ENCODE measurements at regions of chr11 and their contacts with region 1.

Region 1: GRCh38 chr11:63768237-63769043 is at the start of gene ZFTA:
- DNase-seq: no peak
- ATAC-seq: peak; percentile 1
- H3K4me3 ChIP-seq: peak within 1 kb of the TSS; percentile 65 to 98 (median 85)
- H3K27ac ChIP-seq: peak within 1 kb of the TSS; percentile 86
- H3K4me1 ChIP-seq: peaks cover 43% of the 10 kb centered on the region
- H3K27me3 ChIP-seq: peaks cover 0 to 4% of the 10 kb centered on the region in 2 experiments; a peak in 1 of 5 replicates
- CTCF ChIP-seq: peak; percentile 52; the same call in 1 of the 2 replicates
- EP300 ChIP-seq: no peak
- POLR2A ChIP-seq: peak in 1 of 2 experiments; percentile 4; a peak in 1 of 4 replicates
- RAD21 ChIP-seq: peak; percentile 90
- total RNA-seq, gene ZFTA: 6.5 and 10.4 TPM in 2 replicates

Region 2: DNA sequence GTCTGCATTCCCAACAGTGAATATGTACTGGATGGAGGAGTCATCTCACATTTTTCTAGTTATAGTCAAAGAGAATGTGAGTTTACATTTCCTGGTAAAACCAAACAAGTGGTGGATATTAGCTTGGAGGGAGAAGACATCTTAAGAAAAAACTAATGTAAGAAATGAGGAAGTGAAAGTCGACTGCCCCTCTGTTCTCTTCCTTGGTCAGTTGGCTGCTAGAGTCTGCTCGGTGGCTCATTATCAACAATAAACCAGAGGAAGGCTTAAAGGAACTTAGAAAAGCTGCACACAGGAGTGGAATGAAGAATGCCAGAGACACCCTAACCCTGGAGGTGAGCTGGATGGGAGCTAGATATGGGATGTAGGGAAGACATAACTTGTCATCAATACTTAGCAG is 393.0 kb before region 1 on chr11:
- CTCF ChIA-PET with region 1: no interaction called
- POLR2A ChIA-PET with region 1: no interaction called
- in situ Hi-C with region 1: no loop called
- intact Hi-C with region 1: no loop called
- DNase-seq: no peak
- ATAC-seq: no peak
- H3K4me3 ChIP-seq: no peak overlapping the region
- H3K27ac ChIP-seq: no peak overlapping the region
- H3K4me1 ChIP-seq: peaks cover 30% of the 10 kb centered on the region
- H3K27me3 ChIP-seq: no peaks in the 10 kb centered on the region; a peak in 1 of 5 replicates
- CTCF ChIP-seq: no peak
- EP300 ChIP-seq: no peak
- POLR2A ChIP-seq: no peak
- RAD21 ChIP-seq: no peak

Region 3: GRCh38 chr11:63652671-63653070 is 115.8 kb before region 1 on chr11:
- CTCF ChIA-PET with region 1: no interaction called
- POLR2A ChIA-PET with region 1: no interaction called
- in situ Hi-C with region 1: no loop called
- intact Hi-C with region 1: no loop called
- DNase-seq: no peak
- ATAC-seq: no peak
- H3K4me3 ChIP-seq: no peak overlapping the region
- H3K27ac ChIP-seq: no peak overlapping the region
- H3K4me1 ChIP-seq: no peaks in the 10 kb centered on the region
- H3K27me3 ChIP-seq: no peaks in the 10 kb centered on the region
- CTCF ChIP-seq: no peak
- EP300 ChIP-seq: no peak
- POLR2A ChIP-seq: no peak
- RAD21 ChIP-seq: no peak

Region 4: DNA sequence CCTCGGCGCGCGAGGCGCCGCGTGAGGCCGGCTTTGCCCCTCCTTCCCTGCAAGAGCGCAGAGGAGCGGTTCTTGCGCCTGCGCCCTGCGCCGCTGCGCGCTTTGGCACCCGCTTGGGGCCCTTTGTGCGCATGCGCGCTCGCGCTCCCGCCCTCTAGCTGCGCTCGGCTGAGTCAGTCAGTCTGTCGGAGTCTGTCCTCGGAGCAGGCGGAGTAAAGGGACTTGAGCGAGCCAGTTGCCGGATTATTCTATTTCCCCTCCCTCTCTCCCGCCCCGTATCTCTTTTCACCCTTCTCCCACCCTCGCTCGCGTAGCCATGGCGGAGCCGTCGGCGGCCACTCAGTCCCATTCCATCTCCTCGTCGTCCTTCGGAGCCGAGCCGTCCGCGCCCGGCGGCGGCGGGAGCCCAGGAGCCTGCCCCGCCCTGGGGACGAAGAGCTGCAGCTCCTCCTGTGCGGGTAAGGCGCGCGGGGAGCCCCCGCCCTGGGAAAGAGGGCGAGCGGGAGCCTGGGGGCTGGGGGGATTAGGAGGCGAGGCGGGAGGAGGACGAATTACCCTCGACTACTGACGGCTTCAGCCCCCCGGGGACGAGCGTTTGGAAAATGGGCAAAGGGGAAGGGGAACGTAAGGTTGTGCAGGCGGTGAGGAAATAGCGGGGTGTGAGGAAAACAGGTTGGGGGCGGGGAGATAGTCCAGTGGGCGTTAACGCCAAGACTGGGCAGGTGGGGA is 87.0 kb before region 1 on chr11 and contains the start of gene RTN3:
- CTCF ChIA-PET with region 1: no interaction called
- POLR2A ChIA-PET with region 1: interaction called, 11 read pairs
- in situ Hi-C with region 1: no loop called
- intact Hi-C with region 1: no loop called
- DNase-seq: peak; percentile 91
- ATAC-seq: peak; percentile 89
- H3K4me3 ChIP-seq: peak within 1 kb of the TSS; percentile 78 to 83 (median 79)
- H3K27ac ChIP-seq: peak within 1 kb of the TSS; percentile 86
- H3K4me1 ChIP-seq: peaks cover 28% of the 10 kb centered on the region
- H3K27me3 ChIP-seq: peaks cover 0 to 4% of the 10 kb centered on the region in 2 experiments; a peak in 2 of 5 replicates
- CTCF ChIP-seq: peak; percentile 35
- EP300 ChIP-seq: no peak
- POLR2A ChIP-seq: peak; percentile 87 to 94
- RAD21 ChIP-seq: no peak
- total RNA-seq, gene RTN3: 25.3 and 32.2 TPM in 2 replicates

Region 5: GRCh38 chr11:63783925-63784592 is 15.6 kb after region 1 on chr11:
- CTCF ChIA-PET with region 1: no interaction called
- POLR2A ChIA-PET with region 1: interaction called, 12 read pairs
- in situ Hi-C with region 1: no loop called
- intact Hi-C with region 1: no loop called
- DNase-seq: peak; percentile 51
- ATAC-seq: peak; percentile 94
- H3K4me3 ChIP-seq: peak overlapping the region in 2 of 3 experiments; percentile 33 to 34; a peak in 3 of 6 replicates
- H3K27ac ChIP-seq: peak overlapping the region; percentile 87
- H3K4me1 ChIP-seq: peaks cover 22% of the 10 kb centered on the region
- H3K27me3 ChIP-seq: no peaks in the 10 kb centered on the region
- CTCF ChIP-seq: no peak
- EP300 ChIP-seq: no peak
- POLR2A ChIP-seq: peak; percentile 20 to 50; a peak in 1 of 4 replicates
- RAD21 ChIP-seq: no peak

Region 6: DNA sequence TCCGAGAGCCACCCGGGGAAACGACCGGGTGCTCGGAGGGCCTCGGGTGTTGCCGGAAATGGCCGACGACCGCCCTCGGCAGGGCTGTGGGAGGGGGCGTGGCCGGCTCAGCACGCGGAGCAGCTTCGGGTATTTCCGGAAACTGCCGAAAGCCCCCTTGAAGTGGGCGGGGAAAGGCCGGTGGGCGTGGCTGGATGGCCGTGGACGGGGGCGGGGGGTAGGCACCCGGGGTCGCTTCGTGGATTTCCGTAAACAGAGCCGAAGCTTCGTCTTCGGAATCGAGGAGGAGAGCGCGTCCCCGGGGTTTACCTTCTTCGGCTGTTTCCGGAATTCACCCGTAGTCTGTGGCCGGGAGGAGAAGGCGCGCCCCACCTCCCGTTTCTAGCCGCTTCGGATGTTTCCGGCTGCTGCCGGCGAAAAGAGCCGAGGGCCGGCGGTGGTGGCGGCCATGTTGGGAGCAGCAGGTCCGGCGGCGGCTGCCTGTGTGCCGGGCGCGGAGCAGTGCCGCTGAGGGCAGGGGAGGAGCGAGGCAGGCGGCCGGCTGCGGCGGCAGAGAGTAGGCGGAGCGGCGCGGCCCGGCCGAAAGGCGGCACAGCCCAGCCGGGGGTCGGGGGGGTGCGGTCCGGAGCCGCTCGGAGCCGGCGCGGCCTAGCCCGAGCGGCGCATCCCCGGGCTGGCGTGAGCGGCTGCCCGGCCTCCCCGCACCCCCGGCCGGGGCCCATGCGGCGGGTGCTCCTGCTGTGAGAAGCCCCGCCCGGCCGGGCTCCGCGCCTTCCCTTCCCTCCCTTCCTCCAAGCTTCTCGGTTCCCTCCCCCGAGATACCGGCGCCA is 70.5 kb after region 1 on chr11 and contains the start of gene MARK2:
- CTCF ChIA-PET with region 1: no interaction called
- POLR2A ChIA-PET with region 1: interaction called, 15 read pairs
- in situ Hi-C with region 1: no loop called
- intact Hi-C with region 1: loop called (anchors 2 kb)
- DNase-seq: peak; percentile 95
- ATAC-seq: peak; percentile 79
- H3K4me3 ChIP-seq: peak within 1 kb of the TSS; percentile 69 to 96 (median 93)
- H3K27ac ChIP-seq: peak within 1 kb of the TSS; percentile 70
- H3K4me1 ChIP-seq: peaks cover 67% of the 10 kb centered on the region
- H3K27me3 ChIP-seq: no peaks in the 10 kb centered on the region; a peak in 1 of 5 replicates
- CTCF ChIP-seq: 0 out of 2 replicates have a peak, but pooled peaks have one; percentile 3
- EP300 ChIP-seq: no peak
- POLR2A ChIP-seq: peak in 1 of 2 experiments; percentile 58; a peak in 2 of 4 replicates
- RAD21 ChIP-seq: 0 out of 2 replicates have a peak, but pooled peaks have one; percentile 30
- total RNA-seq, gene MARK2: 13.9 and 17.4 TPM in 2 replicates

Region 7: DNA sequence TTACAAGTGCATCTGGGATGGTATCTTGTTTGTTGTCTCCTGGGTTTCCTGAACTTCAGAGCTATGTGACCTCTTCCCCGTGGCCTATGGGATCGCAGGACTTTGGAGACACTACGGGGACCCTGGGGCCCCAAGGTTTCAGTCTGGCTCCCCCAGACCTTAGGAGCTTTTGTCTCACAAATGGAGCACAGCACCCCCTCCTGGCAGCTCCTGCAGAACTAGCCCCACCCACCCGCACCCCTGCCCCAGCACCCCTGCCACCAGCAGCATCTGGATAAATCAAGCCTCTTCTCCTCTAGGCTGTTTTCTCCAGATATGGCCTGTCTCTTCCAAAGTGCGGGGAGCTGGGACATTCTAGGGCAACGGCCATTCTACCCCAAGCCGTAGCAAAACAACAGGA is 138.1 kb after region 1 on chr11:
- CTCF ChIA-PET with region 1: no interaction called
- POLR2A ChIA-PET with region 1: no interaction called
- in situ Hi-C with region 1: loop called (anchors 10 kb)
- intact Hi-C with region 1: loop called (anchors 10 kb)
- DNase-seq: no peak
- ATAC-seq: peak; percentile 8; the same call in 1 of the 3 replicates
- H3K4me3 ChIP-seq: no peak overlapping the region
- H3K27ac ChIP-seq: no peak overlapping the region
- H3K4me1 ChIP-seq: no peaks in the 10 kb centered on the region
- H3K27me3 ChIP-seq: no peaks in the 10 kb centered on the region
- CTCF ChIP-seq: peak; percentile 28; the same call in 1 of the 2 replicates
- EP300 ChIP-seq: no peak
- POLR2A ChIP-seq: no peak
- RAD21 ChIP-seq: no peak

Region 8: DNA sequence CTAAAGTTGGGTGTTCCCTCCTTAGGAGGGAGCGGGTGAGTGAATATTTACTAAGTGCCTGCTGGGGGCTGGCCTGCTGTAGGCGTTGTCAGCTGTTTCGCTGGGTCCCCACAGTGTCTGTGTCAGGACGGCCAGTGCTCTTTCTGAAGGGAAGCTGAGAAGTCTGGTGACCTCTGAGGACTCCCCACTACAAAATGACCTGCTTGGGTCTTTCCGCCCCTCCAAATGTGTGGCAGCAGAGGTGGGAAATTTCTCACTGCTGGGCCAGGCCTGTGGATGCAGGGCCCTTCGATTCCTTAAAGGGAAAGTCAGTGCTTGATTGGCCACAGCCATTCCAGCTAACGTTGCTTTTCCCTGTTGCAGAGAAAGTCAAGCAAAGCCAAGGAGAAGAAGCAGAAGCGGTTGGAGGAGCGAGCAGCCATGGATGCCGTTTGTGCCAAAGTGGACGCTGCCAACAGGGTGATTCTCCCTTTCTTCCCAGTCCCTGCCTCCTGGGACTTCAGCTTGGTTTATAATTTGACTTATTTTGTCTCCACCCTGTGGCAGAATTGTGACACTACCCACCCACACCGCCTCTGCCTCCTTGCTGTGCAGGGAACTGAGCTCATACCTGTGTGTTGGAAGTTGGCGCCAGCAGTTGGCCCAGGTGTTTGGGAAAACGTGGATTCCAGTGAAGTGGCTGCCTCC is 177.2 kb after region 1 on chr11:
- CTCF ChIA-PET with region 1: interaction called, 3 read pairs
- POLR2A ChIA-PET with region 1: interaction called, 8 read pairs
- in situ Hi-C with region 1: no loop called
- intact Hi-C with region 1: loop called (anchors 5 kb)
- DNase-seq: peak; percentile 62
- ATAC-seq: peak; percentile 94
- H3K4me3 ChIP-seq: 0 out of 6 replicates have a peak overlapping the region, but pooled peaks of 1 of the 3 experiments have one; percentile 2
- H3K27ac ChIP-seq: peak overlapping the region; percentile 54
- H3K4me1 ChIP-seq: peaks cover 28% of the 10 kb centered on the region
- H3K27me3 ChIP-seq: no peaks in the 10 kb centered on the region
- CTCF ChIP-seq: peak; percentile 84
- EP300 ChIP-seq: no peak
- POLR2A ChIP-seq: no peak
- RAD21 ChIP-seq: peak; percentile 73

Measured in HepG2 (cell line).